Activated CD4-positive, alpha-beta memory T cell treated with anti-CD3 and anti-CD28 coated beads, Interleukin-2, amount 10 ng/mL, durations not matched to agents 7 days and 5 days (primary cell): ENCODE measurements at regions of chr12 and their contacts with region 1.

Region 1: DNA sequence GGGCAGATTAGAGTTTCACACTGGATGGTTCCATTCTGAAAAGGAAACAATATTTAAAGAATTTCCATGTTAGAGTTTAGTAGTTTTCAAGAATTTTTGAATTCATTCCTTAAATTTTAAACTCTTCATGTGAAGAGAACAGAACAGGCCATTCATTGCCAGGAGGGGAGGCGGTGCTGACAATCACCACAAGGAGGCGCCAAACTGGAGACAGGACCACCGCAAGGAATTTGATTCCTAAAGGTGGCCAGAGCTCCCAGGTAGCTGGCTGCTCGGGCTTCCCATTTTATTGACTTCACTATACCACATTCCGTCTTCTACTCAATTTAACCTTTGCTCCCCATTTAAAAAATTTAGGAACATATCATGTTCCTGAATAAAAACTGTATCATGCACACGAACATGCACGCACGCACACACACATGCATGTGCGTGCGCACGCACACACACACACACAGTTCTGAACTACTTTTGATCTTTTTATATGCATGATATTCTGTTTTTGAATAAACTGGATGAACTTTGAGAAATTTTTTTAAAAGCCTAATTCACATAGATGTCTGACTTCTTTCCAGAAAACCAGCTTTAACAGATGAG is 101.2 kb downstream of the NELL2 start:
- DNase-seq: peak; percentile 56
- H3K4me3 Mint-ChIP-seq: no peak overlapping the region
- H3K27ac Mint-ChIP-seq: no peak overlapping the region
- H3K4me1 Mint-ChIP-seq: no peaks in the 10 kb centered on the region
- H3K27me3 Mint-ChIP-seq: no peaks in the 10 kb centered on the region

Region 2: GRCh38 chr12:44817687-44818086 is 42.8 kb after region 1 on chr12:
- CTCF ChIA-PET with region 1: no interaction called
- POLR2A ChIA-PET with region 1: no interaction called
- DNase-seq: no peak
- H3K4me3 Mint-ChIP-seq: no peak overlapping the region
- H3K27ac Mint-ChIP-seq: no peak overlapping the region
- H3K4me1 Mint-ChIP-seq: peaks cover 19% of the 10 kb centered on the region
- H3K27me3 Mint-ChIP-seq: no peaks in the 10 kb centered on the region

Region 3: DNA sequence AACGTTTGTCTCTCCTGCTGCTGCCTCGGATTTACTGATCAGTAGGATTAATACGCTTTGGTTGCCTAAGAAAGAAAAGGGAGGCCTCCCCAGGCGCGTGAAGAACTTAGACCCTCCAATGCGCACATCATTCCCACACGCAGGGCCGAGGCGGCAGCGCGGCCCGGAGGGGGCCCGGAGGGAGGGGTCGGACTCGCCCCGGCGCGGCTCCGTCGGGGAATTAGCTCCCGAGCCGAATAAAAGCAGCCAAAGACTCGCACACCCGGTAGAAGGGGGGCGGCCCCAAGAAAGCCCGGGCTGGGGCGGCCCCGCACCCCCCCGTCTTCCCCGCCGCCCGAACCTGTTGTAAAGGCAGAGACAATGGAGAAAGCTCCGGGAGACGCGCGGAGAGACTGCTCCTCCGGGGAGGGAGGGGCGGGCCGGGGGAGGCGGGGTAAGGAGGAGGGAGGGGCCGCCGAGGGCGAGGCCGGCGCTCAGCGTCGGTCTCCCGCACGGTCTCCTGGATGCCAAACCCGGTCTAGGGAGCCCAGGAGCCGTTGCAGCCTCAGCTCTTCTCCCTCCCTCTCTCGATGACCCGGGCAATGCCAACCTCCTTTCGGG is 101.1 kb after region 1 on chr12 and contains the start of gene NELL2:
- CTCF ChIA-PET with region 1: interaction called, 14 read pairs
- POLR2A ChIA-PET with region 1: no interaction called
- DNase-seq: peak; percentile 66
- H3K4me3 Mint-ChIP-seq: peak within 1 kb of the TSS; percentile 82
- H3K27ac Mint-ChIP-seq: peak within 1 kb of the TSS; percentile 9
- H3K4me1 Mint-ChIP-seq: peaks cover 31% of the 10 kb centered on the region
- H3K27me3 Mint-ChIP-seq: peaks cover 21% of the 10 kb centered on the region
- total RNA-seq, gene NELL2: 10.1 to 10.5 TPM

Region 4: GRCh38 chr12:44930972-44931600 is 156.2 kb after region 1 on chr12:
- CTCF ChIA-PET with region 1: interaction called, 19 read pairs
- POLR2A ChIA-PET with region 1: no interaction called
- DNase-seq: no peak
- H3K4me3 Mint-ChIP-seq: no peak overlapping the region
- H3K27ac Mint-ChIP-seq: no peak overlapping the region
- H3K4me1 Mint-ChIP-seq: no peaks in the 10 kb centered on the region
- H3K27me3 Mint-ChIP-seq: no peaks in the 10 kb centered on the region